ENCODE measurements at regions of chr9 and their contacts with region 1.

Region 1: GRCh38 chr9:35954942-35955546 is 2.9 kb downstream of the OR2S2 start:
- DNase-seq: peak; percentile 63 to 66
- H3K4me3 ChIP-seq: no peak overlapping the region
- H3K4me3 Mint-ChIP-seq: no peak overlapping the region
- H3K27ac Mint-ChIP-seq: no peak overlapping the region
- H3K4me1 ChIP-seq: peaks cover 10% of the 10 kb centered on the region
- H3K4me1 Mint-ChIP-seq: peaks cover 6% of the 10 kb centered on the region
- H3K27me3 ChIP-seq: no peaks in the 10 kb centered on the region
- H3K27me3 Mint-ChIP-seq: peaks cover 11% of the 10 kb centered on the region
- CTCF ChIP-seq: peak; percentile 75 to 82

Region 2: GRCh38 chr9:35892051-35892450 is 63.0 kb before region 1 on chr9:
- CTCF ChIA-PET with region 1: no interaction called
- POLR2A ChIA-PET with region 1: no interaction called
- intact Hi-C with region 1: no loop called
- DNase-seq: no peak
- H3K4me3 ChIP-seq: no peak overlapping the region
- H3K4me3 Mint-ChIP-seq: no peak overlapping the region
- H3K27ac Mint-ChIP-seq: no peak overlapping the region
- H3K4me1 ChIP-seq: no peaks in the 10 kb centered on the region
- H3K4me1 Mint-ChIP-seq: no peaks in the 10 kb centered on the region
- H3K27me3 ChIP-seq: no peaks in the 10 kb centered on the region
- H3K27me3 Mint-ChIP-seq: peaks cover 13% of the 10 kb centered on the region
- CTCF ChIP-seq: no peak

Region 3: GRCh38 chr9:36023260-36024048 is 68.4 kb after region 1 on chr9:
- CTCF ChIA-PET with region 1: interaction called, 25 read pairs
- POLR2A ChIA-PET with region 1: no interaction called
- intact Hi-C with region 1: loop called (anchors 1 kb)
- DNase-seq: peak; percentile 75 to 76
- H3K4me3 ChIP-seq: no peak overlapping the region
- H3K4me3 Mint-ChIP-seq: no peak overlapping the region
- H3K27ac Mint-ChIP-seq: no peak overlapping the region
- H3K4me1 ChIP-seq: no peaks in the 10 kb centered on the region
- H3K4me1 Mint-ChIP-seq: no peaks in the 10 kb centered on the region
- H3K27me3 ChIP-seq: no peaks in the 10 kb centered on the region
- H3K27me3 Mint-ChIP-seq: peaks cover 7% of the 10 kb centered on the region
- CTCF ChIP-seq: peak; percentile 76 to 92

Region 4: DNA sequence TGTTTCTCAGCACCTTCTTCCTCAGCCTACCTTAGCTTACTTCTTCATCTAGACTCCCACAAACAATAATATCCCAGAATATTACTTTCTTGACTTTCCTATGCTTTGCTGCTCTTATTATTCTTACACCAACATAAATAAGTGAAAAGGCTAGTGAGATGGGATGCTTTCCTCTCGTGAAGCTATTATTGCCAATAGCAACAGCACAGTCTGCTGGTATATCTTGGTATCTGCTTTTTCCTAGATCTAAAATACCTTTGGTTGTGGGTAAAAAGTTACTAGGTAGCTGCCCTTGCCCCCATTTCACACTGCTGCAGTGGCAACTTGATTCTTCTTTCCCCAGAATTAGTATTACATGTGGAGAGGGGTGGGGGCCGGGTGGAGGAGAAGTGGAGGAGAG is 155.4 kb after region 1 on chr9:
- CTCF ChIA-PET with region 1: no interaction called
- POLR2A ChIA-PET with region 1: no interaction called
- intact Hi-C with region 1: loop called (anchors 2 kb)
- DNase-seq: no peak
- H3K4me3 ChIP-seq: no peak overlapping the region
- H3K4me3 Mint-ChIP-seq: no peak overlapping the region
- H3K27ac Mint-ChIP-seq: no peak overlapping the region
- H3K4me1 ChIP-seq: no peaks in the 10 kb centered on the region
- H3K4me1 Mint-ChIP-seq: no peaks in the 10 kb centered on the region
- H3K27me3 ChIP-seq: no peaks in the 10 kb centered on the region
- H3K27me3 Mint-ChIP-seq: no peaks in the 10 kb centered on the region
- CTCF ChIP-seq: peak in 1 of 2 experiments; percentile 37